Right cardiac atrium (tissue), 5 donors: ENCODE measurements at regions of chr3 and their contacts with region 1.

Region 1: DNA sequence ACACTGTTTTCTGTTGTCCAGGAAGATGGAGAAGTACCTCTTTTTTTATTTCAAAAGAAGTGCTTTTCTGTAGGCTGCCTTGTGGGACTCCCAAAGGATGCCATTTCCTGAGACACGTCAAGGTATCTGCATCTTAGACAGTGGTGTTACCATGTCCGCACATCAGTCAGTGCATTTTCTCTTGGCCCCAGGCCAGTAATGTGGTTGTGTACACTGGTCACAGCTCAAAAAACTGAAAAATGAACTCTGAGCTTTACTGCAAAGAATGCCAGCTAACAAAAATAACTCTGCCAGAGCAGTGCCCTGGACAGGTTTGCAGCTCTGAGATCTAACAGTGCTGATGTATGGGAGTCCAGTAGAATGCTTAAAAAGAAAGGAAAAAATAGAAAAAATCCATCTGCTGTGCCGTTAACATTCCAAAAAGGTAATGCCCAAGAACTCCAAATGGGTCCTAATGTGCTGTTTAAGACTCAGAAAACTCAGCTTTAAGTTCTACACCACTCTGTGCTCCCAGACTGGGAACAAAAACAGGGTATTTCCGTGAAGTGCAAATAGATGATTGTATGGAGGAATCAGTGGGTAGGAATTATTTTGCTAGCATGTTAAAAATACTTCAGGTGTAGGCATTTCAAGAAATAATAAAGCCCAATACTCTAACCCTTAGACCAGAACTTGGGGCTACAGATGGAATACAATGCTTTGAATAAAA is 315.9 kb downstream of the FEZF2 start:
- DNase-seq: no peak
- ATAC-seq: peak in 1 of 2 donors; percentile 22
- H3K4me3 ChIP-seq: no peak overlapping the region
- H3K27ac ChIP-seq: no peak overlapping the region
- H3K4me1 ChIP-seq: no peaks in the 10 kb centered on the region
- H3K27me3 ChIP-seq: no peaks in the 10 kb centered on the region

Region 2: GRCh38 chr3:61903931-61904657 is 153.4 kb before region 1 on chr3:
- intact Hi-C with region 1: no loop called
- DNase-seq: peak in 1 of 3 donors; percentile 55
- ATAC-seq: peak; percentile 67 to 79
- H3K4me3 ChIP-seq: no peak overlapping the region
- H3K27ac ChIP-seq: peak overlapping the region; percentile 9
- H3K4me1 ChIP-seq: peaks cover 8% of the 10 kb centered on the region
- H3K27me3 ChIP-seq: no peaks in the 10 kb centered on the region

Region 3: DNA sequence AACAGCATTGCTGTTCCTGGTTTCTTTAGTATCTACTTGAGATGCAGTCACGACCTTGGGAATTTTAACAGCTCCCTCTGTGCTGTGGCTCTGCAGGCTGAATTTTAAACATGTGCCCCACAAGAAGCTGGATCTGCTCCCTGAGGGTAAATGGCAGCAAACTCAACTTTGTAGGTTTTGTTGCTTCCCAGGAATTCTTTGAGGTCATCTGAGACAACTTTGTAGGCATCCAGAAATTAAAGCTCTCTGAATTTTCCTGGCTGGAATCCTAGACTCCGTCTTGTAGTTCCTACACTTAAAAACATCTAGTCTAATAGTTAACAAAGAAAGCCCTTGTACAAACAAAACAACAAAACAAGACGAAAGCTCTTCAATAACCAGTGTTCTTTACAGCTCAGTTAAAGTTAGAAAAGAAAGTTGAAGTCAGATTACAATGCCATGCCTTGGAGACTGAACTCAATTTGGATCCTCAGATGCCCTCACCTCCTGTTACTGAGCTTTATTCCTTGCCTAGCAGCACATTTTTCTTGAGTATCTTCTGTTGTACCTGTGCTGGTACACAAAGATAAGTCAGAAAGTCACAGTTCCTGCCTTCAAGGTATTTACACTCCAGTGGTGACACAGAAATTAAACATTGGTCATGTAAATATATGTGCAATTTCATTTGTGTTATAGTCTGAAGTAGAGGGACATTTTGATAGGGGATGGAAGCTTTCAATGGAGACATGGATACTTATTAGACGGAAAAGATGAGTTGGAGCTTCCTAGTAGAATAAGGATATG is 50.3 kb before region 1 on chr3:
- intact Hi-C with region 1: loop called in 1 of 4 experiments (anchors 5 kb)
- DNase-seq: no peak
- ATAC-seq: no peak
- H3K4me3 ChIP-seq: no peak overlapping the region
- H3K27ac ChIP-seq: no peak overlapping the region
- H3K4me1 ChIP-seq: no peaks in the 10 kb centered on the region
- H3K27me3 ChIP-seq: no peaks in the 10 kb centered on the region